ENCODE measurements at regions of chr19 and their contacts with region 1.

Region 1: GRCh38 chr19:9381367-9381785 is 18.6 kb downstream of the ZNF177 start:
- DNase-seq: no peak
- H3K4me3 ChIP-seq: no peak overlapping the region
- H3K27ac ChIP-seq: no peak overlapping the region
- H3K4me1 ChIP-seq: no peaks in the 10 kb centered on the region
- CTCF ChIP-seq: no peak

Region 2: GRCh38 chr19:9151367-9151766 is 230.0 kb before region 1 on chr19:
- CTCF ChIA-PET with region 1: no interaction called
- POLR2A ChIA-PET with region 1: no interaction called
- intact Hi-C with region 1: no loop called
- DNase-seq: no peak
- H3K4me3 ChIP-seq: no peak overlapping the region
- H3K27ac ChIP-seq: no peak overlapping the region
- H3K4me1 ChIP-seq: peaks cover 8% of the 10 kb centered on the region
- CTCF ChIP-seq: no peak

Region 3: GRCh38 chr19:9362905-9363304 is 18.5 kb before region 1 on chr19 and contains the start of gene ZNF177:
- CTCF ChIA-PET with region 1: no interaction called
- POLR2A ChIA-PET with region 1: interaction called, 10 read pairs
- intact Hi-C with region 1: no loop called
- DNase-seq: no peak
- H3K4me3 ChIP-seq: no peak within 1 kb of the TSS
- H3K27ac ChIP-seq: no peak within 1 kb of the TSS
- H3K4me1 ChIP-seq: no peaks in the 10 kb centered on the region
- CTCF ChIP-seq: no peak
- total RNA-seq, gene ZNF177: 1.8 and 2.4 TPM in 2 replicates

Measured in OCI-LY7 (cell line).